ENCODE measurements at regions of chr2 and their contacts with region 1.

Region 1: DNA sequence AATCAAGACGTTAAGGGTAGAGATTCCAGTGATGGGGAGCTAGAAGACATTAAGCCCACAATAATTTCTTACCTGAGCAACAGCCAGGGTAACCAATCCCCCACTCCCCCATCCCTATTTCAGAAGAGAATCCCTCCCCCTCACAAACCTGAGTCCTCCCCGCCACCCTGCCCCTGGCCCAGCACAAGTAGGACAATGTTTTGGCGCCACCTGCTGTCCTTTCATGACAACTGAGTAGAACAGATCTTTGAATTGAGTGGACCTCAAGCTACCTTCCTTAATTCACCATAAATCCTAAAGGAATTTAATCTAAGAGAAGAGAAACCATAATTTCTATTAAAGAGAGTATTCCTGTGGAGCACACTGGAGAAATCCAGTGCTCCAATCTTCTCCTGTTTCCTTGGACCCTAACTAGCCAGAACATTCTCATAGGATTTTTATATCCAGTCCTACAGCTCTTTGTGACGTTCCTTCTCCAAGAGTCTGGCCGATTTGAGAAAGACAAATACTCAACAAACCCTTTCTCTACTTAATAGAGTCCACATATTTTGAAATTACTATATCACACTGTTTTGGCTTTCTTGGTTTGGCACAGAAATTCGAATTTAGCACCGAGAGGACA is 41.1 kb downstream of the NHEJ1 start:
- H3K4me3 ChIP-seq: no peak overlapping the region
- H3K27ac ChIP-seq: no peak overlapping the region
- H3K4me1 ChIP-seq: peaks cover 27% of the 10 kb centered on the region
- CTCF ChIP-seq: peak; percentile 63

Region 2: DNA sequence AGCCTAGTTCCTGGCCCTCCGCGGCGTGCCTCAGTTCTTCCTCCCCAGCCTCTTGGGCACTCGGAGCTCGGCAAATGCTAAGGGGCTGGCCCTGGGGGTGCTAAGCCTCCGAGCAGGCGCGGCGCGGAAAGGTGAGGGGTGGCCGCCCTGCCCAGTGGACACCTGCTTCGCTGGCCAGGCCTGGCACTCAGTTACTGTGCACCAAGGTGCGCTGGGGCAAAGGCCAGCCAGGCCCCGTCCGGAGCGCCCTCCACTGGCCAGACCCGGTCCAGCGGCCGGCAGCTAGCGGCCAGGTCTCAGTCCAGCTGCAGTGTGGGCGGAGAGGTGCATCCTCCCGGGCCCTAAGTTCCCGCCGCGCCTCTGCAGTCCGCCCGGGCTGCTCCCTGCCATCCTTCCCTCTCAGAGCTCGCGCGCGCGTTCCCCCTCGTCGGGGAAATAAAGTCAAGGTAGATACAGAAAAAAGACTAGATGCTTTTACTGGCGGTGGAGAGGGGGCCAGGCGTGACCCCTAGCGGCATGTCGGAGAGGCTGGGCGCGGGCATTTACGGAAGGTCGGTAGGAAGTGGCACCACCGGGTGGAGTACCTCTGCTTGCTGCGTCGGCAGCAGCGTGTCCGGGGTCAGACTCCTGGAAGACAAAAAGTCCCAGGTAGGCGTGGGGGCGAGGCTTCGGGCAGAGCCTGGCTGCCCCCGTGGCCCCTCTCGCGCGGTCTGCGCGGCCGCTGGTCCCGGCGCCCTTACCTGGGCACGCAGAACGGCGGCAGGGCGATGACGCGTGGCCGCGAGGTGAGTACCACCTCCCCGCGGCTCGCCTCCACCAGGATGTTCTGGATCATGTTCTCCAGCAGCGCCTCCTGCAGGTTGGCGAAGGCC is 116.9 kb before region 1 on chr2:
- CTCF ChIA-PET with region 1: interaction called, 18 read pairs
- POLR2A ChIA-PET with region 1: no interaction called
- H3K4me3 ChIP-seq: peak overlapping the region; percentile 28
- H3K27ac ChIP-seq: no peak overlapping the region; the same call in 1 of the 2 replicates
- H3K4me1 ChIP-seq: no peaks in the 10 kb centered on the region
- CTCF ChIP-seq: peak; percentile 86

Region 3: GRCh38 chr2:219041252-219041651 is 78.3 kb before region 1 on chr2 and contains the start of gene CFAP65:
- CTCF ChIA-PET with region 1: interaction called, 10 read pairs
- POLR2A ChIA-PET with region 1: no interaction called
- H3K4me3 ChIP-seq: peak within 1 kb of the TSS; percentile 50
- H3K27ac ChIP-seq: no peak within 1 kb of the TSS
- H3K4me1 ChIP-seq: no peaks in the 10 kb centered on the region
- CTCF ChIP-seq: no peak

Region 4: GRCh38 chr2:219073413-219074129 is 46.0 kb before region 1 on chr2:
- CTCF ChIA-PET with region 1: interaction called, 47 read pairs
- POLR2A ChIA-PET with region 1: no interaction called
- H3K4me3 ChIP-seq: no peak overlapping the region
- H3K27ac ChIP-seq: no peak overlapping the region
- H3K4me1 ChIP-seq: no peaks in the 10 kb centered on the region
- CTCF ChIP-seq: no peak

Region 5: DNA sequence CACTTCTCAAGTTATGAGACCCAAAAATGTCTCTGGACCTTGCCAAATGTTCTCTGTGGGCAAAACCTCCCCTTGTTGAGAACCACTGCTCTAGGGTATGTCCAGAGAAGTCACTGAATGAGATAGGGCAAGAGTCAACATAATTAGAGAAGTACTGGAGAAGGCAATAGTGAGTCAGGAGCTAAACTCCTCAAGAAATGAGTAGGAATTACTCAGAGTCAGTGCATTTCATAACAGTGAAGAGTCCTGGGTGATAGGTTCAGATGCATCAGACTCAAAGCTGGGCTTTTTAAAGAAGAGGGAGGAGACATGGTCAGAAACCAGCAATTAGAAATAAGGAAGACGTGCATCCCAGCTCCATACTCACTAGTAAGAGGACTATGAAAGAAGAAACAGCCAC is 20.2 kb before region 1 on chr2:
- CTCF ChIA-PET with region 1: interaction called, 38 read pairs
- POLR2A ChIA-PET with region 1: interaction called, 3 read pairs
- H3K4me3 ChIP-seq: no peak overlapping the region
- H3K27ac ChIP-seq: no peak overlapping the region
- H3K4me1 ChIP-seq: no peaks in the 10 kb centered on the region
- CTCF ChIP-seq: no peak

Region 6: GRCh38 chr2:219109471-219109870 is 10.1 kb before region 1 on chr2:
- CTCF ChIA-PET with region 1: interaction called, 38 read pairs
- POLR2A ChIA-PET with region 1: no interaction called
- H3K4me3 ChIP-seq: no peak overlapping the region
- H3K27ac ChIP-seq: no peak overlapping the region
- H3K4me1 ChIP-seq: no peaks in the 10 kb centered on the region
- CTCF ChIP-seq: no peak

Region 7: GRCh38 chr2:219160186-219161017 is 40.9 kb after region 1 on chr2 and contains the start of gene NHEJ1:
- CTCF ChIA-PET with region 1: interaction called, 123 read pairs
- POLR2A ChIA-PET with region 1: no interaction called
- H3K4me3 ChIP-seq: peak within 1 kb of the TSS; percentile 83
- H3K27ac ChIP-seq: peak within 1 kb of the TSS; percentile 97
- H3K4me1 ChIP-seq: peaks cover 5% of the 10 kb centered on the region; the same call in 1 of the 2 replicates
- CTCF ChIP-seq: peak; percentile 96

Measured in HEK293 (cell line).